Activated CD4-positive, alpha-beta memory T cell treated with anti-CD3 and anti-CD28 coated beads, Interleukin-2, amount 10 ng/mL, durations not matched to agents 7 days and 5 days (primary cell): ENCODE measurements at regions of chr22 and their contacts with region 1.

Region 1: GRCh38 chr22:40346178-40347118 is at the start of gene ADSL:
- DNase-seq: peak; percentile 88
- H3K4me3 Mint-ChIP-seq: peak within 1 kb of the TSS; percentile 88
- H3K27ac Mint-ChIP-seq: peak within 1 kb of the TSS; percentile 96
- H3K4me1 Mint-ChIP-seq: peaks cover 50% of the 10 kb centered on the region
- H3K27me3 Mint-ChIP-seq: no peaks in the 10 kb centered on the region
- total RNA-seq, gene ADSL: 95.0 to 105 TPM

Region 2: DNA sequence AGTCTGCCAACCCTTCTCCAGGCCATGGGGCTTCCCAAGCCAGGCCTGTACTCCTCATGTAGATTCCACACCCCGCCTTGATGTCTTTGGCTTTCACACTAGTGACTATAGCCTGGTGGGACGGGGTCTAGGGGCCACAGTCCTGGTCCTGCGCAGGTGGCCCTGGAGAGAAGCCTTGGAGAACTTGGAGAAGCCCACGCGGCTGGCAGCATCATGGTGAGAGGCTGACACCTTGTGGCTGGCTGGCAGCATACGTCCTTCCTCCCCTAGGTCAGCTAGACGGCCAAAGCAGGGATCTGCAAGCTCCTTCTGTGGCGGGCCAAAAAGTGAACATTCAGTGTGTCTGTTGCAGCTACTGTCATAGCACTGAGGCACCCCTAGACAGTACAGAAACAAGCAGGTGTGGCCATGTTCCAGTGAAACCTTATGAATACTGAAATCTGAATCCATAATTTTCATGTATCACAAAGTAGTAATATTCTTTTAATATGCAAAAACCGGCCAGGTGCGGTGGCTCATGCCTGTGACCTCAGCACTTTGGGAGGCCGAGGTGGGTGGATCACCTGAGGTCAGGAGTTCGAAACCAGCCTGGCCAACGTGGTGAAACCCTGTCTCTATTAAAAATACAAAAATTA is 309.7 kb before region 1 on chr22:
- CTCF ChIA-PET with region 1: interaction called, 29 read pairs
- POLR2A ChIA-PET with region 1: interaction called, 5 read pairs
- DNase-seq: peak; percentile 63
- H3K4me3 Mint-ChIP-seq: no peak overlapping the region
- H3K27ac Mint-ChIP-seq: no peak overlapping the region
- H3K4me1 Mint-ChIP-seq: no peaks in the 10 kb centered on the region
- H3K27me3 Mint-ChIP-seq: peaks cover 19% of the 10 kb centered on the region

Region 3: DNA sequence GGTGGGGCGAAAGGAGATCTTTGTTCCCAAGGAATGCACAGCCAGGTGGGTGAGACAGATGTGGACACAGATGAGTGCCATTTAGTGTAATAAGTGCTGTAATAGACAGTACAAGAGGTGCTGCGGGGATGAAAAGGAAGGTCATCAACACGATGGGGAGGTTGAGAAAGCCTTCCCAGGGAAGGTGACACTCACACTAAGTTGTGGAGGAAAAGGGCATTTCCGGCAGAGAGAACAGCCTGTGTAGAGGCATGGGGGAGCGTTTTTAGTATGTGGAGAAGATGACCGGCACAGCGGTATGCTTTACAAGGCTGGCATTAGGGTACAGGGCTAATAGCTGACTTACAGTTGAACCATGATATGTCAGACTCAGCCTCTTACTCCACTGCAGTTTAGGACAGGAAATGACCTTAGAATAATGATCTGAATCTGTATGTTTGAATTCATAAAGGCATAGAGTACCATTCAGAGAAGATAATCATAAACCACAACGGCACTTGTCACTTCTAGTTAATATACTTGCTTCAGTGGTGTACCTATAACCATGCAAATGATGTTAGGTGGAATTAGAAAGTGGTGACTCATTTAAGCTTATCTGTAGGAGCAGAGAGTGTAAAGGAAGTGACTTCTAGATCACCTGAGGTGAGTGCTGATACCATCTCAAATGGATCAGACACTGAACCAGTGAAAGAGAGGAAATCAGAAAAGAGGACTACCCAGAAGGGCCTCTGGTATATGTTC is 291.1 kb before region 1 on chr22:
- CTCF ChIA-PET with region 1: interaction called, 17 read pairs
- POLR2A ChIA-PET with region 1: interaction called, 28 read pairs
- DNase-seq: peak; percentile 35
- H3K4me3 Mint-ChIP-seq: peak overlapping the region; percentile 62
- H3K27ac Mint-ChIP-seq: peak overlapping the region; percentile 93
- H3K4me1 Mint-ChIP-seq: peaks cover 75% of the 10 kb centered on the region
- H3K27me3 Mint-ChIP-seq: no peaks in the 10 kb centered on the region

Region 4: DNA sequence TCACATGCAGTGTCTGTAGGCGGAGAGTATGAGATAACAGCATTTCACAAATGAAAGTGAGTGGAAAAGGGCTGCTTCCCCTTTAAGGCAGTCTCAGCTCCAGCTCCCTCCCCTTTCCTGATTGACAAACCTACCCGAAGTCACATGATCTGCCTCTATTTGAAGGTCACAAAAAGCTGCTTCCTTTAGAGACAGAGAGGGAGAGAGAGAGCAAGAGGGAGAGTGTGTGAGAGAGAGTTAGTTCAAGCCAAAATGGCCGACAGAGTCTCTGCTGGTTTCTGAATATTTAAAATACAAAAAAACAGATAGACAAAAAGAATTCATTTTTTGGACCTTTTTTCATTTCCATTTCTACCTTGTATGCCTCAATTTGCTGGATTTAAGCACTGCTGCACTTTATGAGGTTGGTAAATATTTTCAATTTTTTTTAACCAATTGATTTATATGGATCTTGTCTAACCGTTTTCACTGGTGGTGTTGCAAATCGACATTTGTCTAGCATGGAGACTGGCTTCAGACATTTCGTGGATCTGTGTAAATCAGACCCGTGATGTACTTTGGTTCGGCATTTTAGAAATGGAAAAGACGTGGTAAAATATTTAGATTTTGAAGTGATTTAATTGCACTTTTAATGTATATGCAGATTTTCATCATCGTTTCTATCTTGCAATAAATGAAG is 168.6 kb before region 1 on chr22 and contains the start of gene TNRC6B:
- CTCF ChIA-PET with region 1: interaction called, 17 read pairs
- POLR2A ChIA-PET with region 1: interaction called, 89 read pairs
- DNase-seq: peak; percentile 82
- H3K4me3 Mint-ChIP-seq: peak within 1 kb of the TSS; percentile 92
- H3K27ac Mint-ChIP-seq: peak within 1 kb of the TSS; percentile 92
- H3K4me1 Mint-ChIP-seq: peaks cover 49% of the 10 kb centered on the region
- H3K27me3 Mint-ChIP-seq: no peaks in the 10 kb centered on the region
- total RNA-seq, gene TNRC6B: 51.0 to 55.0 TPM

Region 5: GRCh38 chr22:40247976-40248375 is 98.5 kb before region 1 on chr22:
- CTCF ChIA-PET with region 1: interaction called, 7 read pairs
- POLR2A ChIA-PET with region 1: interaction called, 11 read pairs
- DNase-seq: peak; percentile 74
- H3K4me3 Mint-ChIP-seq: no peak overlapping the region
- H3K27ac Mint-ChIP-seq: peak overlapping the region; percentile 48
- H3K4me1 Mint-ChIP-seq: peaks cover 64% of the 10 kb centered on the region
- H3K27me3 Mint-ChIP-seq: no peaks in the 10 kb centered on the region

Region 6: GRCh38 chr22:40326905-40327735 is 19.3 kb before region 1 on chr22:
- CTCF ChIA-PET with region 1: interaction called, 17 read pairs
- POLR2A ChIA-PET with region 1: interaction called, 90 read pairs
- DNase-seq: no peak
- H3K4me3 Mint-ChIP-seq: no peak overlapping the region
- H3K27ac Mint-ChIP-seq: no peak overlapping the region
- H3K4me1 Mint-ChIP-seq: peaks cover 83% of the 10 kb centered on the region
- H3K27me3 Mint-ChIP-seq: no peaks in the 10 kb centered on the region